ENCODE measurements at regions of chr1 and their contacts with region 1.

Region 1: DNA sequence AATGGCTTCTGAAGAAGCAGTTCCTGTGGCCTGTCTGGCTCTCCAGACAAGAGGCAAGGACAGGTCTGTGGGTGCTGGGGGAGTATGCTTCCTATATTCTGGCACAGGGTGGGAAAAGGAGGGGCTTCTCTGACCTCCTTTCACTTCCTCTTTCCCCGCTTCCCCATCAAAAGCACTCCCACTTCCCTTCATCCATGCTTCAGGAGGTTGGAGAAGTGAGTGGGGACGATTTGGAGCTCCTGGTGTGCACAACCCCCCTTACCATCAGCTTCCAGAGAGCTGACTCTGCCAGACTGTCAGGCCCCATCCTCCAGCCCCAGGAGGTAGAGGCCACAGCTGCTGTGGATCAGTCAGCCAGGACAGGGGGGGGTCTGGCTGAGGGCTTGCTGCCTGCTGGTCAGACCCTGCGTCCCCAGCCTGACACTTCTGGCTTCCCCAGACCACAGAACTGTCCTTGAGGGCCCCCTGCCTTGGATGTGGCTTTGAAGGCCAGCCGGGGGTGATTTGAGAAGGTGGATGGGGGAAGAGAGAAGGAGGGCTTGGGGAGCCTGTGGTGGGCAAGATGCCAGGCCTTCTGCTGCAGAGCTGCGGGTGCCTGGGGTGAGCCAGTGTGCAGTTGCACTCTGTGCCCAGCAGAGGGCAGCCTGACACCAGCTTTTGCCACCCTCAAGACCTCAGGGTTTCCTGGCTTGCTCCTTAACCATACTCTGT is 21.5 kb upstream of the TMEM222 start:
- DNase-seq: peak; percentile 52
- H3K4me3 ChIP-seq: no peak overlapping the region
- H3K27me3 ChIP-seq: no peaks in the 10 kb centered on the region
- CTCF ChIP-seq: peak; percentile 97

Region 2: GRCh38 chr1:27026621-27027574 is 273.6 kb before region 1 on chr1:
- CTCF ChIA-PET with region 1: no interaction called
- POLR2A ChIA-PET with region 1: interaction called, 15 read pairs
- DNase-seq: peak; percentile 44
- H3K4me3 ChIP-seq: no peak overlapping the region
- H3K27me3 ChIP-seq: no peaks in the 10 kb centered on the region
- CTCF ChIP-seq: no peak

Region 3: GRCh38 chr1:27111626-27112573 is 188.6 kb before region 1 on chr1:
- CTCF ChIA-PET with region 1: interaction called, 10 read pairs
- POLR2A ChIA-PET with region 1: no interaction called
- DNase-seq: peak; percentile 99
- H3K4me3 ChIP-seq: no peak overlapping the region
- H3K27me3 ChIP-seq: no peaks in the 10 kb centered on the region
- CTCF ChIP-seq: peak; percentile 65

Region 4: GRCh38 chr1:27321813-27322577 is 21.5 kb after region 1 on chr1 and contains the start of gene TMEM222:
- CTCF ChIA-PET with region 1: interaction called, 24 read pairs
- POLR2A ChIA-PET with region 1: no interaction called
- DNase-seq: peak; percentile 75
- H3K4me3 ChIP-seq: peak within 1 kb of the TSS; percentile 89
- H3K27me3 ChIP-seq: no peaks in the 10 kb centered on the region
- CTCF ChIP-seq: no peak
- polyA plus RNA-seq, gene TMEM222: 39.4 and 76.2 TPM in 2 replicates

Region 5: GRCh38 chr1:27357281-27358037 is 57.0 kb after region 1 on chr1:
- CTCF ChIA-PET with region 1: interaction called, 60 read pairs
- POLR2A ChIA-PET with region 1: no interaction called
- DNase-seq: no peak
- H3K4me3 ChIP-seq: no peak overlapping the region
- H3K27me3 ChIP-seq: no peaks in the 10 kb centered on the region
- CTCF ChIP-seq: peak; percentile 91

Region 6: DNA sequence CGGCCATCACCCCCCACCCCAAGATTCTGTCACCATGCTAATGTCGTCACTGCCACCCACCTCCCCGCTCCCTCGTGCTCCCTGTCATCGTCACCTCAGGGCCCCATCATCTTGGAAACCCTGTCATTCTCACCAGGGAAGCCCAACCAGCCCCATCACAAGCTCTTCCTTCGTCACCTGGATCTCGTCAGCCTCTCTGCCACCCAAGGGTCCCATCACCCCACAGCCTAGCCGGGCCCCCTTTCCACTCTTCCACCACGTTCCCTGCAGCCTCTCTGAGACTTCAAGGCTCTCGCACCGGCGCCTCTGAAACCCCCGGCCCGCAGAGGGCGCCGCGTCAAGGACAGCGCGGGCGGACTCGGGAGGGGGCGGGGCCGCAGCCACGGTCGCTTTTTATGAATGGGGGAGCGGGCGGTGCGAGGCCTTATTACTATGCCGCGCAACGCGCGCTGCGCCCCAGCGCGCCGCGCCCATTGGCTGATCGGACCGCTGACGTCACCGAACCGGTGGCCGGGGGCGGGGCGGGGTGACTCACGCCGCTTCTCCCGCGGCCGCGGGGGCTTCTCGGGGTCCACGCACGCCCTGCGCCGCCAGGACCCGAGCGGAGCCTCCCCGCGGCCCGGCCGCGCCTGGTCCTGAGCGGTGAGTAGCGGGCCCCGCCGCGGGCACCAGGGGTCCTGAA is 91.7 kb after region 1 on chr1 and contains the start of gene GPR3:
- CTCF ChIA-PET with region 1: interaction called, 353 read pairs
- POLR2A ChIA-PET with region 1: no interaction called
- DNase-seq: no peak
- H3K4me3 ChIP-seq: peak within 1 kb of the TSS; percentile 70
- H3K27me3 ChIP-seq: no peaks in the 10 kb centered on the region
- CTCF ChIP-seq: peak; percentile 77
- polyA plus RNA-seq, gene GPR3: 1.0 and 1.8 TPM in 2 replicates

Region 7: DNA sequence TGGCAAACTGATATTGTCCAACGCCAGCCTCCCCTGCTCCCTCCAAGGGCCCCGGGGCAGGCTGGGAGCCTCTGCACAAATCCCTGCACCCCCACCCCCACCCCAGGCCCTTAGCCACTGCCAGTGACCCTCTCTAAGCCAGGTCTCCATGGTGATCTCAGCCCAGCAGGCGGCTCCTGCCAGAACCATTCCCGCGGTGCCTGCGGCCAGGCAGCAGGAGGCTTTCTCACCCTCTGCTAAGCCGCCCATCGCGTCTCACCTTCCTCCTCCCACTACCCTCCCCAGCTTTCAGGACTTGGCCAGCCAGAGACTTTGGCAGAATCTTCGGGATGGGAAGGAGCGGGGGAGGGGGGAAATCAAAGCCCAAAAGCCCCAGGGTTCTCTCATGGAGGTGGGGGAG is 236.3 kb after region 1 on chr1:
- CTCF ChIA-PET with region 1: no interaction called
- POLR2A ChIA-PET with region 1: no interaction called
- DNase-seq: no peak
- H3K4me3 ChIP-seq: no peak overlapping the region
- H3K27me3 ChIP-seq: no peaks in the 10 kb centered on the region
- CTCF ChIP-seq: peak; percentile 30

Region 8: GRCh38 chr1:28642847-28643635 is 1342.5 kb after region 1 on chr1 and contains the start of gene TAF12:
- CTCF ChIA-PET with region 1: no interaction called
- POLR2A ChIA-PET with region 1: interaction called, 10 read pairs
- DNase-seq: peak; percentile 85
- H3K4me3 ChIP-seq: peak within 1 kb of the TSS; percentile 71
- H3K27me3 ChIP-seq: no peaks in the 10 kb centered on the region
- CTCF ChIP-seq: peak; percentile 36
- polyA plus RNA-seq, gene TAF12: 31.8 and 46.8 TPM in 2 replicates

Region 9: GRCh38 chr1:28835237-28835650 is 1534.7 kb after region 1 on chr1:
- CTCF ChIA-PET with region 1: no interaction called
- POLR2A ChIA-PET with region 1: no interaction called
- DNase-seq: no peak
- H3K4me3 ChIP-seq: no peak overlapping the region
- H3K27me3 ChIP-seq: peaks cover 12% of the 10 kb centered on the region
- CTCF ChIP-seq: no peak